Activated T-helper 1 cell treated with anti-CD3 and anti-CD28 coated beads, Interleukin-12 subunit alpha, Interleukin-12 subunit beta, Interleukin-2, Interleukin-4 antibody, amounts not matched to agents 30 ng/mL and 10 ng/mL and 1 ng/mL, durations not matched to agents 14 hours and 24 hours and 36 hours (primary cell): ENCODE measurements at regions of chr14 and their contacts with region 1.

Region 1: GRCh38 chr14:34931206-34931605 is 51.6 kb upstream of the SRP54 start:
- DNase-seq: peak; percentile 10
- H3K4me3 Mint-ChIP-seq: peak overlapping the region; percentile 59
- H3K27ac Mint-ChIP-seq: peak overlapping the region; percentile 81
- H3K4me1 Mint-ChIP-seq: peaks cover 35% of the 10 kb centered on the region
- H3K27me3 Mint-ChIP-seq: no peaks in the 10 kb centered on the region

Region 2: GRCh38 chr14:34420547-34421150 is 510.6 kb before region 1 on chr14:
- intact Hi-C with region 1: no loop called
- DNase-seq: no peak
- H3K4me3 Mint-ChIP-seq: no peak overlapping the region
- H3K27ac Mint-ChIP-seq: no peak overlapping the region
- H3K4me1 Mint-ChIP-seq: no peaks in the 10 kb centered on the region
- H3K27me3 Mint-ChIP-seq: peaks cover 6% of the 10 kb centered on the region

Region 3: GRCh38 chr14:34865889-34866574 is 65.2 kb before region 1 on chr14:
- intact Hi-C with region 1: no loop called
- DNase-seq: no peak
- H3K4me3 Mint-ChIP-seq: no peak overlapping the region
- H3K27ac Mint-ChIP-seq: no peak overlapping the region
- H3K4me1 Mint-ChIP-seq: peaks cover 24% of the 10 kb centered on the region
- H3K27me3 Mint-ChIP-seq: no peaks in the 10 kb centered on the region

Region 4: GRCh38 chr14:34966413-34966812 is 35.2 kb after region 1 on chr14:
- intact Hi-C with region 1: loop called (anchors 5 kb)
- DNase-seq: no peak
- H3K4me3 Mint-ChIP-seq: no peak overlapping the region
- H3K27ac Mint-ChIP-seq: peak overlapping the region; percentile 62
- H3K4me1 Mint-ChIP-seq: peaks cover 14% of the 10 kb centered on the region
- H3K27me3 Mint-ChIP-seq: no peaks in the 10 kb centered on the region